ENCODE measurements at regions of chr12 and their contacts with region 1.

Region 1: GRCh38 chr12:47397664-47398281 is 308.1 kb downstream of the RPAP3 start:
- DNase-seq: peak; percentile 68
- ATAC-seq: peak; percentile 86
- H3K4me3 Mint-ChIP-seq: peak overlapping the region; percentile 24
- H3K27ac Mint-ChIP-seq: peak overlapping the region; percentile 82
- H3K4me1 Mint-ChIP-seq: peaks cover 65% of the 10 kb centered on the region
- H3K27me3 Mint-ChIP-seq: no peaks in the 10 kb centered on the region

Region 2: DNA sequence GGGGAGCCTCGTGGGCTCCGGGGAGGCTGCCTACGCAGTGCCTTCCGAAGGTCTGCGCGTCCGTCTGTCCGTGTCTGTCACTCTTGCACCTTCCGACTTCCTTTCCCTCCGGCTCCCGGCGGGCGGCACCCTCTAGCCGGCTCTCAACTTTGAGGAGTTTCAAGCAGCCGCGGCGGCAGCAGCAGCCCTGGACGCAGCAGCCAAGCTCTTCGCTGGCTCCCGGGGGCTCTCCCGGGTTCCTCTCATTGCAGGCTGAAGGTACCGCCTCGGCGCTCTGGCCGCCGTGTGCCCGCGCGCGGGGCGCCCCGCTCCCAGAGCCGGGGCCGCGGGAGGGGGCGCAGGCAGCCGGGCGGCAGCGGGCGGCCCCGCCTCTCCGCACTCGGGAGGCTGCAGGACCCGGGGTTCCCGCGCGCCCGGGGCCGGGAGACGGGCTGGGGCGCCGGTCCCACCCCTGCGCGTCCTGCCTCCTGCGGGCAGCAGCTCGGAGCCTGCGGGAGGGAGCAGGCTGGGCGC is 318.2 kb before region 1 on chr12 and contains the starts of genes AMIGO2 and PCED1B:
- CTCF ChIA-PET with region 1: interaction called, 32 read pairs
- POLR2A ChIA-PET with region 1: interaction called, 5 read pairs
- DNase-seq: peak; percentile 77
- ATAC-seq: peak; percentile 67
- H3K4me3 Mint-ChIP-seq: peak within 1 kb of the TSS; percentile 94
- H3K27ac Mint-ChIP-seq: peak within 1 kb of the TSS; percentile 90
- H3K4me1 Mint-ChIP-seq: peaks cover 62% of the 10 kb centered on the region
- H3K27me3 Mint-ChIP-seq: no peaks in the 10 kb centered on the region
- total RNA-seq, gene AMIGO2: 10.2 TPM
- total RNA-seq, gene PCED1B: 72.1 to 74.2 TPM

Region 3: GRCh38 chr12:47207340-47207717 is 190.4 kb before region 1 on chr12:
- CTCF ChIA-PET with region 1: interaction called, 56 read pairs
- POLR2A ChIA-PET with region 1: interaction called, 184 read pairs
- DNase-seq: peak; percentile 77
- ATAC-seq: peak; percentile 70
- H3K4me3 Mint-ChIP-seq: peak overlapping the region; percentile 83
- H3K27ac Mint-ChIP-seq: peak overlapping the region; percentile 91
- H3K4me1 Mint-ChIP-seq: peaks cover 75% of the 10 kb centered on the region
- H3K27me3 Mint-ChIP-seq: no peaks in the 10 kb centered on the region

Region 4: GRCh38 chr12:47302111-47302671 is 95.6 kb before region 1 on chr12:
- CTCF ChIA-PET with region 1: interaction called, 34 read pairs
- POLR2A ChIA-PET with region 1: interaction called, 5 read pairs
- DNase-seq: no peak
- ATAC-seq: peak; percentile 66
- H3K4me3 Mint-ChIP-seq: peak overlapping the region; percentile 5
- H3K27ac Mint-ChIP-seq: peak overlapping the region; percentile 75
- H3K4me1 Mint-ChIP-seq: peaks cover 60% of the 10 kb centered on the region
- H3K27me3 Mint-ChIP-seq: no peaks in the 10 kb centered on the region

Region 5: DNA sequence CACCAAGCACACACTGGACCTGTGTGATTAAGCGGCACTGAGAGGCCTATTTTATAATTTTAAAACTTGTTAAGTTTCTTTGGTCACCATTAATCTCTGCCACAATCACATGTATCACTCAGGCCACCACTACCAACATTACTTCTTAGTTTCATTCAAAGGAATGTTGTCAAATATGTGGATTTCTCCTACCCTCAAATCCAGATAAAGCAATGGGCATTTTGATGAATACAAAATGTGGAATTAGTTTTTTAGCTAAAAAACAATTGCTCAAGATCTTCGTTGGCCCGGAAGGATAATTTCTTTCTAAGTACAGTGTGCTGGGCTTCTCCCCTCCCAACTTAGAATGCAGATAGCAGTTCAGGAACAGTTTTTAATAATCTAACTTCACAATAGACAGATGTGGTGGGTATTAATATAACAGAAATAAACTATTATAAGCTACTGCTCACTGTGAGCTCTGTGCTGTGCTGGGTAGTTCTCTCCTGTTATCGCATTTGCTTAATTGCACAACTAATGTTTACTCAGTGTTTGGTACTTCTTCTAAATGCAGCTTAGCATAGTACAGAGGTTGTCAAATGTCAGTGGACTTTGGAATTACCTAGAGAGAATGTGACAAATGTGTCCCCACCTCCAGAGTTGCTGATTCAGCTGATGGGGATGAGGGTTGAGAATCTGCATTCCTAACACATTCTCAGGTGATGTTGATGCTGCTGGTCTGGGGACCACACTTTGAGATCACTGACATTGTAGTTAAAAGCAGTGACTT is 51.3 kb before region 1 on chr12:
- CTCF ChIA-PET with region 1: interaction called, 15 read pairs
- POLR2A ChIA-PET with region 1: no interaction called
- DNase-seq: no peak
- ATAC-seq: no peak
- H3K4me3 Mint-ChIP-seq: no peak overlapping the region
- H3K27ac Mint-ChIP-seq: no peak overlapping the region
- H3K4me1 Mint-ChIP-seq: peaks cover 36% of the 10 kb centered on the region
- H3K27me3 Mint-ChIP-seq: no peaks in the 10 kb centered on the region

Region 6: DNA sequence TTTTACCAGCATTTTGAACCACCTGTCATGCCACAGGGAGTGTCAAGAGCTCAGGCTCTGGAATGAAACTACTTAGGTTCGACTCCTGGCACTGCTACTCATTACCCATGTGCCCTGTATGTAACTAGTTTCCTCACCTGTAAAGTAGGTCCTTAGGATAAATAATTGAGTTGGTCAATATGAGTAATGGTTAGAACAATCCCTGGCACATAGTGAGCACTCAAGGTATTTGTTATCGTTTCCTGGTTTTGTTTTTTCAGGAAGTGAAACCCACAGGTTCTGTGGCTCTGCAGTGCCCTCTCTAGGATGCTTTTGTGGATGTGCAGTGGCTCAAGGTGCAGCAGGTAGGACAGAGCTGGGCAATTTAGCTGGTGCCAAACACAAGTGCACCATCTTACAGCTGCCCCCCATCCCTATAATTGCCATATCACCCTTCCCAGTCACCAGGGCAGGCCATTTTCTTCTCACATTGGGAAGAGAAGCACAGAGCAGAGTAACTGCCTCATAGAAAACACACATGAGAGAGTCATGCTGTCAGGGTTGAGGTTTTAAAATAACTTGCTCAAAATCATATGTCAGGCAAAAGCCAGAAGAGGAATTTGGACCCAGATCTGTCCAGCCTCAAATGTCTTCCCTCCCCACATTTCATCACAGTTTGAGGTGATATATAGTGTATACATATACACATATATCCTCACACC is 10.5 kb after region 1 on chr12:
- CTCF ChIA-PET with region 1: interaction called, 20 read pairs
- POLR2A ChIA-PET with region 1: no interaction called
- DNase-seq: peak; percentile 67
- ATAC-seq: peak; percentile 80
- H3K4me3 Mint-ChIP-seq: no peak overlapping the region
- H3K27ac Mint-ChIP-seq: peak overlapping the region; percentile 73
- H3K4me1 Mint-ChIP-seq: peaks cover 49% of the 10 kb centered on the region
- H3K27me3 Mint-ChIP-seq: no peaks in the 10 kb centered on the region

Region 7: DNA sequence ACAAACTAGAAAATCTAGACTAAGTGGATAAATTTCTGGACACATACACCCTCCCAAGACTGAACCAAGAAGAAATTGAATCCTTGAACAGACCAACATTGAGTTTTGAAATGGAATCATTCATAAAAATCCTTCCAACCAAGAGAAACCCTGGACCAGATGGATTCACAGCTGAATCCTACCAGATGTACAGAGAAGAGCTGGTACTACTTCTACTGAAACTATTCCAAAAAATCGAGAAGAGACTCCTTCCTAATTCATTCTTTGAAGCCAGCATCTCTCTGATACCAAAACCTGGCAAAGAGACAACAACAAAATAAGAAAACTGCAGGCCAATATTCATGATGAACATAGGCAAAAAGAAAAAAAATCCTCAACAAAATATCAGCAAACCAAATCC is 80.7 kb after region 1 on chr12:
- CTCF ChIA-PET with region 1: no interaction called
- POLR2A ChIA-PET with region 1: no interaction called
- DNase-seq: no peak
- ATAC-seq: no peak
- H3K4me3 Mint-ChIP-seq: no peak overlapping the region
- H3K27ac Mint-ChIP-seq: no peak overlapping the region
- H3K4me1 Mint-ChIP-seq: no peaks in the 10 kb centered on the region
- H3K27me3 Mint-ChIP-seq: no peaks in the 10 kb centered on the region

Measured in activated CD8-positive, alpha-beta T cell treated with anti-CD3 and anti-CD28 coated beads, Interleukin-2, amount 10 ng/mL, durations not matched to agents 7 days and 5 days (primary cell).